Activated naive CD4-positive, alpha-beta T cell treated with anti-CD3 and anti-CD28 coated beads for 36 hours (primary cell): ENCODE measurements at regions of chr7 and their contacts with region 1.

Region 1: DNA sequence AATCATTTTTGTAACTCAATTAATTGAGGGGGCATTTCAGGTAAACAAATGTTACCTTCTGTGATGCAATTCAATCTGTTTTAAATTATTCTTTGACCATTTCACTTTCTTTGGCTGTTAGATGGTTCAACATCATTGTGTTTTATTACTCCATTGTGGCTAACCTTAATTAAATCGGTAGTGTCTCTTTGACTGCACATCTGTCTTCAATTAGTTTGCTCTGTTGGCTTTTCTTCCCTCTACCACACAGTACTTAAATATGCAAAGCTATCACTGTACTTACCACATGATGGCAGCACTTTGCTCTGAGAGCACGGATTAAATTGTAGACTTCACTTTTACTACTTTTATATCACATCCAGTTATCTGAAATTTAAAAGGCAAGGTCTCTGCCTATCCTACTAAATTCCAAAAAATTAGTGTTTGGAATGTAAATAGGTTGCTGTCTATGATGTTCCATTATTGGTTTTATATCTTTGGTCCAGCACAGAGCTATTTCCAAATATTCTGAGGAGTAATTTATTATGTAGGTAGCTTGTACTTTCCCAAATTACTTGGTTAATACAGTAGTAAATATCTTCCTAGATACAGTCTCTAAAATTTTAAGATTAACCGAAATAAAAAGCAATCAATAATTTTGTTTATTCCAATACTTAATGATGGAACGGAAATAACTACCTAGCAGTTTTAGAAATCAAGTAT is 352.0 kb downstream of the PCLO start:
- DNase-seq: peak; percentile 11
- H3K4me3 Mint-ChIP-seq: no peak overlapping the region
- H3K27ac Mint-ChIP-seq: no peak overlapping the region
- H3K4me1 Mint-ChIP-seq: no peaks in the 10 kb centered on the region
- H3K27me3 Mint-ChIP-seq: no peaks in the 10 kb centered on the region

Region 2: DNA sequence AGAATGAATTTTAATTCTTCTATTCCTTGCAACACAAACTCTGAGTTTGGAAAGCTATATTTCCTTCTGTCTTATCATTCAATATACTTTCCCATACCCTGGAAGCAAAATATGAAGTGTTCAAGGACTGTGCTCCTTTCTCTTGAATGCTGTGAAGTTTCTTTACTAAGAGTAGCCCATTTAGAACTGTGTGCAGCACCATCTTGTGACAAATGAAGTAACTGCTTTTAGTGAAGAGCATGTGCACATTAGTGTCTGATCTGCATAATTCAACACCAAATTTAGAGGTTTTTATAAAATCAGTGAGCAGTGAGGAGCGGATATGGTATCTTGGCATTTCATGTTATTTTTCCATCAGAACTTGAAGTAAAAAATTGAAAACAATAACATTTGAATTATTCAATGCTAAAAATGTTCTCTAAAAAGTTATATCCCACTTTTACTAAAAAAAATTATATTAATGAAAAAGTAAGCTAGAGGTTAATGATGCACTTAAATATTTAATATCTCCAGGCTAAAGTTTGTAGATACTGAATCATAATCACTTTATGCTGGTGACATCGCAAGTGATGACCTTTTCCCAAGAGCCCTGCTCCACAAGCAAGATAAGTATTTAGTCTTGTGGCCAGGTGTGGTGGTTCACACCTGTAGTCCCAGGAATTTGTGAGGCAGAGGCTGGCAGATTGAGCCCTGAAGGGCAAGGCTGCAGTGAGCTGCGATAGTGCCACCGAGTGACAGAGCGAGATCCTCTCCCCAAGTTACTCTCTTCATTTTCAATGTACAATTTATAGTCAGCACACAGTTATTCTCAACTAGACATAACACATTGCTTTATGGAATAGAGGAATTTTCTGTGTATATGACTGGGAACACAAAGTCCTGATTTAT is 460.7 kb after region 1 on chr7:
- CTCF ChIA-PET with region 1: no interaction called
- intact Hi-C with region 1: loop called (anchors 2 kb)
- DNase-seq: no peak
- H3K4me3 Mint-ChIP-seq: no peak overlapping the region
- H3K27ac Mint-ChIP-seq: no peak overlapping the region
- H3K4me1 Mint-ChIP-seq: no peaks in the 10 kb centered on the region
- H3K27me3 Mint-ChIP-seq: no peaks in the 10 kb centered on the region

Region 3: GRCh38 chr7:83655951-83656556 is 845.3 kb after region 1 on chr7:
- CTCF ChIA-PET with region 1: no interaction called
- intact Hi-C with region 1: loop called (anchors 1 kb)
- DNase-seq: peak; percentile 13
- H3K4me3 Mint-ChIP-seq: no peak overlapping the region
- H3K27ac Mint-ChIP-seq: no peak overlapping the region
- H3K4me1 Mint-ChIP-seq: no peaks in the 10 kb centered on the region
- H3K27me3 Mint-ChIP-seq: no peaks in the 10 kb centered on the region